Uterus (tissue), 4 donors: ENCODE measurements at regions of chr2 and their contacts with region 1.

Region 1: DNA sequence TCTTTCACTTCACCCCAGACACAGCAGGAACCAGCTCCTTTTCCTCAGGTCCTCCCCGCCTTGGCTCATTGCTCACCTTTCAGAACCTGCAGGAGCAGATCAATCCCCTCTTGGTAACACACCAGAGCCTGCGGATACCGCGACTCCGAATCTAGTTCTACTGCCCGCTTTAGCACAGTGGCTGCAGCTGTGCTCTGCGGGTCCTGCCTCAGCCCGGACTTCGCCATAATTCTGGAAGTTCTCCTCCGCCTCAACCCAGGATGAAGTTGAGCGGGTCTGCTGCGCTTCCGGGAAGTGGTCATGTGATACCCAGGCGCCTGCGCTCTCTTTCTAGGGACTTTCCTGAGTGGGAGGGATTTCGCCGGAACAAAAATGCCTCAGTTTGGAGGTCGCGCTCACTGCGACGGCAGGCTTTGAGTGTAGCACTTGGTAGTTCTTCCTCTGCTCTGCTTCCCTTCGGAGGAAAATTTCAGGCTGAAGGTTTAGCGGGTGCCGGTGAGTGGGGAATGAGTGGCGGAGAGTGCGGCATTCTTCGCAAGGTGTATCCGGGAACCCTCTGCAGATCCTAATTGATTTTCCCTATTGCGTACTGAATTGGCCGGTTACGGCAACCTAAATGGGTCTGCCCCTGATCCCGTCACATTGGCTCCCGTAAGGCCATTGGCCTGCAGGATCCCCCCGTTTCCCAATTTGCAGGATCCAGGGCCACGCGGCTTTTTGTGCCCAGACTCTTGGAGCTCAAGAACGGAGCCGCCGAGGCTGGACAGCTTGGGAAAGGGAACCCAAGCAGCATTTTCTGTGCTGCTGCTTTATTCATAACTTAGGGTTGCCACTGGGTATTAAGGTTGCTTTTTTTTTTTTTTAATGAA is at the starts of genes MITD1 and MRPL30:
- DNase-seq: peak; percentile 91 to 93
- H3K4me3 ChIP-seq: peak within 1 kb of the TSS; percentile 74 to 90
- H3K27ac ChIP-seq: peak within 1 kb of the TSS; percentile 63 to 79
- H3K4me1 ChIP-seq: peaks cover 5 to 13% of the 10 kb centered on the region in 2 donors
- H3K27me3 ChIP-seq: no peaks in the 10 kb centered on the region
- CTCF ChIP-seq: no peak
- POLR2A ChIP-seq: peak; percentile 42 to 66
- total RNA-seq, gene MITD1: 6.2 to 41.0 (median 22.7) TPM
- total RNA-seq, gene MRPL30: 27.2 to 47.7 (median 28.8) TPM

Region 2: DNA sequence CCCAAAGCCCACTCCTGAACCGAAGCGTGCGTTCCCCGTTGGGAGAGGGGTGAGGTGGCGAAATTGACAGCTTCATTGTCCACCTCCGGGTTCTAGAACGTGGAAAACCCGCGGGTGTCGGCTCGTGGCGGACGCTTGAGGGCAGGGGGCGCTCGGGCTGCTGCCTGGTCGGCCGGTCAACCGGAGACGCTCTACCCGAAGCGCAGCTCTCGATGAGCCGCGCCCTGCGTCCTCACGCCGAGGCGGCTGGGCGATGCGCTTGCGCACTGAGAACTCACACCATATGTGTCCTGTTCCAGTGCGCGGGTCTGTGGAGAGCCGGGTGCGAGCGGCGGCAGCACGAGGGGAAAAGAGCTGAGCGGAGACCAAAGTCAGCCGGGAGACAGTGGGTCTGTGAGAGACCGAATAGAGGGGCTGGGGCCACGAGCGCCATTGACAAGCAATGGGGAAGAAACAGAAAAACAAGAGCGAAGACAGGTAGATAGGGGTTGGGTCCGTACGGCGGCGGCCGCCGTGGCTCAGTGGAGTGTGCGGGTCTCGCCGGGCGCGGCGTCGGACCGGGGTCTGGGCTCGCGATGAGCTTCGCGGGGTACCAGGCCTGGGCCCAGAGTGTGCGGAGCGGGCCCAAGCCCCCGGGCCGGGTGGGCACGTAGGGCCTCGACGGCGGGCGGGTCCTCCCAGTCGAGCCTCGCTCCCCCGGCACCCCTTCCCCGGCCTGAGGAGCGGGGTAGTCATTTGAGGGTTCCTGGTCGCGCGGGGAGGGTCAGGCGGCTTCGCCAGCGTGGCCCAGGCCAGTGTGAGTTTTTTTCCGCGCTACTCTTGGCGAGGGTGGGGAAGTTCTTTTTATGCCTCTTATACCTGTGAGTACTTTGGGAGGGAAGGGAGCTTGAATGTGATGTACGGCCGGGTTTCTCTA is 156.4 kb after region 1 on chr2 and contains the start of gene EIF5B:
- intact Hi-C with region 1: loop called (anchors 10 kb)
- DNase-seq: peak; percentile 93 to 95
- H3K4me3 ChIP-seq: peak within 1 kb of the TSS; percentile 68 to 84
- H3K27ac ChIP-seq: peak within 1 kb of the TSS; percentile 86 to 92
- H3K4me1 ChIP-seq: peaks cover 6% of the 10 kb centered on the region in 2 donors
- H3K27me3 ChIP-seq: no peaks in the 10 kb centered on the region
- CTCF ChIP-seq: peak; percentile 56 to 83 (median 79)
- POLR2A ChIP-seq: peak; percentile 31 to 55
- total RNA-seq, gene EIF5B: 21.4 to 83.5 (median 33.5) TPM

Region 3: DNA sequence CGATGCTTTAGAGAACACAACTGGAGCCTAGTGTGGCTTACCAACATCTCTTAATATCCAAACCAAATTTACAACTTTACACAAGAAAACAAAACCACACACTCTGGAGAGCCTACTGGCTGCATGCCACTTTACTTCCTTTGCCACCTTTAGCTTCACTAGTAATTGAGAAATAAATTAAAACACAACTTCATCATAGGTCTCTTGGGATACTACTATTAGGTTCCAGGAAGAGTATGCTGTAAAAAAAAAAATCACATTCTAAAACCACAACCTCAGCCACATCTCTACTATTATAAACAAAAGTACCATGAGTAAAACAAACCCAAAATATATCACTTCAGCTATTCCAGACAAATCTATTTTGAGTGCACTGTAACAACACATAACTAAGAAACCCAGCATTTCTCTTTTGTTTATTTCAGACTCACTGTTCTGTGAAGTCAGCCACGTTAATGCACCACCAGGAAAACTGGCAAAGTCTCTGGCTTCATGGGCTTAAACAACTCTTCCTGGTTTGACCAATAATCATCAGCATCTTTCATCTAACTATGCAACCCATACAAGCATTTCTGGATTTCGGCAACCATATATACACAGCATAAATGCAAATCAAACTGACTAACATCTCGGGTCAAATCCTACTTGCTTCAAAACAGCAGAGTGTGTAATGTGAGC is 249.8 kb after region 1 on chr2:
- intact Hi-C with region 1: no loop called
- DNase-seq: no peak
- H3K4me3 ChIP-seq: no peak overlapping the region
- H3K27ac ChIP-seq: no peak overlapping the region
- H3K4me1 ChIP-seq: no peaks in the 10 kb centered on the region
- H3K27me3 ChIP-seq: no peaks in the 10 kb centered on the region
- CTCF ChIP-seq: no peak
- POLR2A ChIP-seq: no peak